ENCODE measurements at regions of chr10 and their contacts with region 1.

Region 1: DNA sequence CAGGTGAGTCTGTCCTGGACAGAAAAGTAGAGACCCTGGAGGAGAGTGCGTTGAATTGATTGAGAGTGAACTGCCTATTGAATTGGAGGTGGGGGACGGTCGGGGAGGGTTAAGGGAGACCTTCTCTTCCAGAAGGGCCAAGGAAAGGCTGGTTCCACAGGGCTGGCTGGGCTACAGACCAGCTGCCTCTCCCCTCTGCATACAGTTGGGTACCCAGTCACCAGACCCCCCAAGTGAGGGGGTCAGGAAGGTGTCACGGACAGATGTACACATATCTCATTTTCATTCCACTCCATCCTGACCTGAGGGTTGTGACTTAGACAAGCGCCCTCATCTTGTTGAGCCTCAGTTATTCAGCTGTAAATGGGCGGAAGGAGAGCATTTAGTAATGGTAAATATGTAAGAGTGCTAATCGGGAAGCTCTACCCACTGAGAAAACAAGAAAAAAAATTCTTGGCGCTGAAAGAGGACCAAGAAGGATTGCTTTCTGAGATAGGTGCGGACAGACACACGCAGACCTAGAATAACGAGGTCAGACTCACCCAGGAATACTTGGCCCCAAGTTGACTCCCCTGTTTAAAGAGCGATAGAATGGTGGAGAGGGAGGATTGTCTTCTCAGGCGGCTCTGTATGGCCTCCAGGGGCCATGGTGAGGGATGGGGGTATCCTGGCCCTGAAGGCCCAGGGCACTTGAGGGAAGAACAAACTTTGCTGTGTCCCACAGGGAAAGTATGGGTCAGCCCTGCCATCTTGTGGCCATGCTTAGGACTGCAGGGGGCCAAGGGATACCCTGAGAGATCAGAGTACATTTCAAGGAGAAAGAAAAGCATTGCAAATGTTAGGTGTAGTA is 7.2 kb upstream of the MBL2 start:
- DNase-seq: peak; percentile 53
- ATAC-seq: peak; percentile 99
- H3K4me3 ChIP-seq: no peak overlapping the region
- H3K27ac ChIP-seq: no peak overlapping the region
- H3K4me1 ChIP-seq: no peaks in the 10 kb centered on the region
- H3K27me3 ChIP-seq: peaks cover 19% of the 10 kb centered on the region
- CTCF ChIP-seq: peak; percentile 92
- POLR2A ChIP-seq: no peak
- RAD21 ChIP-seq: peak; percentile 89

Region 2: GRCh38 chr10:52644373-52645186 is 135.2 kb before region 1 on chr10:
- CTCF ChIA-PET with region 1: interaction called, 8 read pairs
- POLR2A ChIA-PET with region 1: no interaction called
- dilution Hi-C with region 1: no loop called
- in situ Hi-C with region 1: no loop called
- intact Hi-C with region 1: loop called (anchors 1 kb)
- DNase-seq: peak; percentile 32
- ATAC-seq: peak; percentile 82
- H3K4me3 ChIP-seq: no peak overlapping the region
- H3K27ac ChIP-seq: no peak overlapping the region
- H3K4me1 ChIP-seq: no peaks in the 10 kb centered on the region
- H3K27me3 ChIP-seq: no peaks in the 10 kb centered on the region; the same call in 1 of the 2 replicates
- CTCF ChIP-seq: peak; percentile 75
- POLR2A ChIP-seq: no peak
- RAD21 ChIP-seq: peak; percentile 68

Region 3: DNA sequence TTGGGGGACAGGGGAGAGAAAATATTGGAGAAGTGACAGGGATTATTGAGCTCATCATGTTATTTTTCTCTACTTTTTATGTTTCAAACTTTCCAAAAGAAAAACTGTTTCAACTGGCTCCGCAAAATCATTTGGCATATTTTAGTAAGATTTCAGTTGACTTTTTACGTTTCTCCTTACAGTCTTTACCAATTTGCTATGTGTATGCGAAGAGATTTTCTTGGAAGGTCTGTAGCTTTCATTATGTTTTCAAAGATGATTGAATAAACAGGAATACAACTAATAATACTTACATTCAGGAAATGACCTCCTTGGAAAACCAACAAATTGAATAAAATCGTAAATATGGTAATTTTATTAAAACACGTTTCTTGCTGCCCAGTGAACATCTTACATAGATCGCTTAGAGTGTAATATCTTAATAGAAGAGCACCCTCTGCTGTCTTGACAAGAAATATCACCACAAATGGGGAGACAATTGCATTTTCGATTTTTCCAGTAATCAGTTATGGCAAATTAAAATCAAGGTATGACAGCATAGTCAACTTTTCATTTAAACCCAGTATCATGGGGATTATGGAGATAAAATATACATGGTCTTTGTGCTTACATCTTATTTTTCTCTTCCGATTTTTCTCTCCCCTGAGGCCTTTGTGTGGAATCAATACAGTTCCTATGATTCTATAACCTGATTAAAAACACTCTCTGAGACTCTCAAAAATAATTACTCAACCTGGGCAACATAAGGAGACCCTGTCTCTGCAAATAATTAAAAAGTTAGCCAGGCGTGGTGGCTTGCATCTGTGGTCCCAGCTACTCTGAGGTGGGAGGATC is 50.3 kb before region 1 on chr10:
- CTCF ChIA-PET with region 1: no interaction called
- POLR2A ChIA-PET with region 1: no interaction called
- dilution Hi-C with region 1: no loop called
- in situ Hi-C with region 1: no loop called
- intact Hi-C with region 1: no loop called
- DNase-seq: peak; percentile 43
- ATAC-seq: peak; percentile 82
- H3K4me3 ChIP-seq: no peak overlapping the region
- H3K27ac ChIP-seq: no peak overlapping the region
- H3K4me1 ChIP-seq: no peaks in the 10 kb centered on the region
- H3K27me3 ChIP-seq: no peaks in the 10 kb centered on the region
- CTCF ChIP-seq: peak; percentile 68
- POLR2A ChIP-seq: no peak
- RAD21 ChIP-seq: peak; percentile 66

Region 4: GRCh38 chr10:52740913-52741675 is 38.7 kb before region 1 on chr10:
- CTCF ChIA-PET with region 1: interaction called, 10 read pairs
- POLR2A ChIA-PET with region 1: no interaction called
- dilution Hi-C with region 1: no loop called
- in situ Hi-C with region 1: loop called (anchors 5 kb)
- intact Hi-C with region 1: loop called (anchors 1 kb)
- DNase-seq: peak; percentile 17
- ATAC-seq: peak; percentile 81
- H3K4me3 ChIP-seq: no peak overlapping the region
- H3K27ac ChIP-seq: no peak overlapping the region
- H3K4me1 ChIP-seq: no peaks in the 10 kb centered on the region
- H3K27me3 ChIP-seq: no peaks in the 10 kb centered on the region; the same call in 1 of the 2 replicates
- CTCF ChIP-seq: peak; percentile 62
- POLR2A ChIP-seq: no peak
- RAD21 ChIP-seq: peak; percentile 52

Region 5: GRCh38 chr10:52900593-52900992 is 120.8 kb after region 1 on chr10:
- CTCF ChIA-PET with region 1: no interaction called
- POLR2A ChIA-PET with region 1: no interaction called
- dilution Hi-C with region 1: no loop called
- in situ Hi-C with region 1: no loop called
- intact Hi-C with region 1: no loop called
- DNase-seq: no peak
- ATAC-seq: no peak
- H3K4me3 ChIP-seq: no peak overlapping the region
- H3K27ac ChIP-seq: no peak overlapping the region
- H3K4me1 ChIP-seq: no peaks in the 10 kb centered on the region
- H3K27me3 ChIP-seq: 0 out of 2 replicates have a peak, but pooled peaks cover 1% of the 10 kb centered on the region
- CTCF ChIP-seq: no peak
- POLR2A ChIP-seq: no peak
- RAD21 ChIP-seq: no peak

Region 6: GRCh38 chr10:53276797-53277196 is 497.0 kb after region 1 on chr10:
- CTCF ChIA-PET with region 1: no interaction called
- POLR2A ChIA-PET with region 1: no interaction called
- dilution Hi-C with region 1: no loop called
- in situ Hi-C with region 1: no loop called
- intact Hi-C with region 1: no loop called
- DNase-seq: no peak
- ATAC-seq: no peak
- H3K4me3 ChIP-seq: no peak overlapping the region
- H3K27ac ChIP-seq: no peak overlapping the region
- H3K4me1 ChIP-seq: no peaks in the 10 kb centered on the region
- H3K27me3 ChIP-seq: no peaks in the 10 kb centered on the region
- CTCF ChIP-seq: no peak
- POLR2A ChIP-seq: no peak
- RAD21 ChIP-seq: no peak

Measured in IMR-90 (cell line).